CD8-positive, alpha-beta T cell (primary cell): ENCODE measurements at regions of chr14 and their contacts with region 1.

Region 1: DNA sequence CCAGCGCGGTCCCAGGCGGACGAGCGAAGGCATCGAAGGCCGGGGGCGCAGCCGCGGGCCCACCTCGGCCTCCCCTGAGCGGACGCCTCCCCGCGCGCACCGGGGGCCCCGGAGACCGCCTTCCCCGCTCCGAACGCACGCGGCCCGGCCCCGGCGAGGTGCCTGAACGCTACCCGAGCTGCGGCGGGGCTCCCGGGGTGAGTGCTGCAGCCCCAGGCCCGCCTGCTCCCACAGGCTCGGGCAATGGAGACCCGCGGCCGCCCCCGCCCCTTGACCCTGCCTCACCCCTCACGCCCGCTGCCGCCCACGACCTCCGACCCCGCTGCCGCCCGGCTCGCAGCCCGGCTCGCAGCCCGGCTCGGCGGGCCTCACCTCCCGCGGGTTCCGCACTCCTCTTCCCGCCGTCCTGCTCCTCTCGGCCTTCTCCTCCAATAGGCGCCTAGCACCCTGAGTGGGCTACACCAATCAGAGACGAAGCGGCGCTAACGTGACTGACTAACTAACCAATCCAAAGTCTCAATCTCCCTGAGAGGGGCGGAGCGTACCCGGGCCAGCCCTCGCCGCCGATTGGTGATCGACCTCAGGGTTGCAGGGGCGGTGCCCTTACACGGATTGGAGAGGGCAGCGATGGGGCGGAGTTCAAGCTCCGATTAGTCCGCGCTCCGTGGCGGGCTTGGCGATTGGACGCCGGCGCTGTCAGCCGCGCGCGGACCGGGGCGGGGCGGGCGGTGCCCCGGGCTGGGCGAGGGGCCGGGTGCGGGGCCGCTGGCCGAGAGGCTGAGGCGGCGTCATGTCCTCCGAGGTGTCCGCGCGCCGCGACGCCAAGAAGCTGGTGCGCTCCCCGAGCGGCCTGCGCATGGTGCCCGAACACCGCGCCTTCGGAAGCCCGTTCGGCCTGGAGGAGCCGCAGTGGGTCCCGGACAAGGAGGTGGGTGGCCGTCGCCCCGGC is at the starts of genes XRCC3 and ZFYVE21:
- DNase-seq: peak; percentile 99 to 100 (median 99)
- ATAC-seq: peak; percentile 96
- H3K4me3 ChIP-seq: peak within 1 kb of the TSS; percentile 47 to 74
- H3K4me3 Mint-ChIP-seq: peak within 1 kb of the TSS; percentile 97
- H3K27ac ChIP-seq: peak within 1 kb of the TSS in 1 of 2 experiments; percentile 33
- H3K27ac Mint-ChIP-seq: peak within 1 kb of the TSS; percentile 89
- H3K4me1 ChIP-seq: peaks cover 18% of the 10 kb centered on the region
- H3K4me1 Mint-ChIP-seq: peaks cover 43% of the 10 kb centered on the region
- H3K27me3 ChIP-seq: no peaks in the 10 kb centered on the region
- H3K27me3 Mint-ChIP-seq: no peaks in the 10 kb centered on the region
- CTCF ChIP-seq: no peak
- total RNA-seq, gene XRCC3: 5.5 to 6.6 TPM
- total RNA-seq, gene ZFYVE21: 2.5 to 3.7 TPM

Region 2: GRCh38 chr14:103520657-103521437 is 194.5 kb before region 1 on chr14:
- CTCF ChIA-PET with region 1: no interaction called
- POLR2A ChIA-PET with region 1: no interaction called
- intact Hi-C with region 1: loop called in 1 of 2 experiments (anchors 1 kb)
- DNase-seq: peak; percentile 34 to 87 (median 69)
- ATAC-seq: peak; percentile 79
- H3K4me3 ChIP-seq: peak overlapping the region; percentile 41 to 57
- H3K4me3 Mint-ChIP-seq: peak overlapping the region; percentile 71
- H3K27ac ChIP-seq: no peak overlapping the region
- H3K27ac Mint-ChIP-seq: no peak overlapping the region
- H3K4me1 ChIP-seq: peaks cover 24% of the 10 kb centered on the region
- H3K4me1 Mint-ChIP-seq: peaks cover 10% of the 10 kb centered on the region
- H3K27me3 ChIP-seq: peaks cover 5 to 14% of the 10 kb centered on the region in 2 experiments
- H3K27me3 Mint-ChIP-seq: peaks cover 5% of the 10 kb centered on the region
- CTCF ChIP-seq: peak; percentile 57

Region 3: GRCh38 chr14:103562429-103563225 is 152.7 kb before region 1 on chr14 and contains the starts of genes BAG5 and COA8:
- CTCF ChIA-PET with region 1: no interaction called
- POLR2A ChIA-PET with region 1: interaction called, 3 read pairs
- intact Hi-C with region 1: loop called in 1 of 2 experiments (anchors 1 kb)
- DNase-seq: peak; percentile 68 to 92 (median 86)
- ATAC-seq: peak; percentile 81
- H3K4me3 ChIP-seq: peak within 1 kb of the TSS; percentile 96 to 97
- H3K4me3 Mint-ChIP-seq: peak within 1 kb of the TSS; percentile 83
- H3K27ac ChIP-seq: peak within 1 kb of the TSS; percentile 81 to 86
- H3K27ac Mint-ChIP-seq: peak within 1 kb of the TSS; percentile 87
- H3K4me1 ChIP-seq: peaks cover 46% of the 10 kb centered on the region
- H3K4me1 Mint-ChIP-seq: peaks cover 62% of the 10 kb centered on the region
- H3K27me3 ChIP-seq: no peaks in the 10 kb centered on the region
- H3K27me3 Mint-ChIP-seq: no peaks in the 10 kb centered on the region
- CTCF ChIP-seq: no peak
- total RNA-seq, gene BAG5: 46.2 to 46.3 TPM
- total RNA-seq, gene COA8: 11.6 to 13.4 TPM

Region 4: GRCh38 chr14:103628684-103629502 is 86.4 kb before region 1 on chr14 and contains the start of gene KLC1:
- CTCF ChIA-PET with region 1: no interaction called
- POLR2A ChIA-PET with region 1: interaction called, 3 read pairs
- intact Hi-C with region 1: loop called (anchors 1 to 2 kb)
- DNase-seq: peak; percentile 67 to 91 (median 85)
- ATAC-seq: peak; percentile 83
- H3K4me3 ChIP-seq: peak within 1 kb of the TSS; percentile 84 to 98
- H3K4me3 Mint-ChIP-seq: peak within 1 kb of the TSS; percentile 87
- H3K27ac ChIP-seq: peak within 1 kb of the TSS; percentile 81 to 87
- H3K27ac Mint-ChIP-seq: peak within 1 kb of the TSS; percentile 89
- H3K4me1 ChIP-seq: peaks cover 41% of the 10 kb centered on the region
- H3K4me1 Mint-ChIP-seq: peaks cover 47% of the 10 kb centered on the region
- H3K27me3 ChIP-seq: no peaks in the 10 kb centered on the region
- H3K27me3 Mint-ChIP-seq: no peaks in the 10 kb centered on the region
- CTCF ChIP-seq: no peak
- total RNA-seq, gene KLC1: 119 to 130 TPM

Region 5: DNA sequence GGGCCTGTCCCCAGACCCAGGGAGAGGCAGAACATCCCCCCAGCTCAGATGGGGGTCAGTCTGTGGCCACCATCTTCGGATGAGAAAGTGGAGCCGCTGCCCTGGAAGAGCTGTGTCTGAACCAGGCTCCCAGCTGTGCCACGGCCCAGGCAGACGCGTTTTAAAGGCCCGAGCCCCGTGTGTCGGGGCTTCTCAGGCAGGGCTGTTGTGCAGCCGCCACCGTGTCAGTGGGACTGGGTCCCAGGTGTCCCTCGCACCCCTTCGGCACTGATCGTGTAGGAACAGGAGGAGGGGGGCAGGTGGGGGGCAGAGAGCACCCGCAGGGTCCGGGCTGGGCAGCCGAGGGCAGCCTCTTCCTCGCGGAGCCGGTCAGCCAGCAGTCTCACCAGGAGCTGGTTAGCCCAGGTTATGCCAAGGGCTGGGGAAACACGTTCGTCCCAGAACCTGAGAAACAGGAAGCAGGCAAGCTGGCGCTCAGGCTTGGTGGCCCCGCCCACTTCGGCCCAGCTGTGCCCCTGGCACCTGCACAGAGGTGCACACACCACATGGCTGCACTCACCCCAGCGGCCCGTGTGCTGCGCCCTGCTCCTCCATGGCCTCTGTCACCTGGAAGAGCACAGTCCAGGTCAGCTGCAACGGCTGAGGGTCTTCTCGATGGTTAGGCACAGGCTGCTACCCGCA is 16.6 kb before region 1 on chr14:
- CTCF ChIA-PET with region 1: no interaction called
- POLR2A ChIA-PET with region 1: no interaction called
- intact Hi-C with region 1: no loop called
- DNase-seq: no peak
- ATAC-seq: no peak
- H3K4me3 ChIP-seq: no peak overlapping the region
- H3K4me3 Mint-ChIP-seq: no peak overlapping the region
- H3K27ac ChIP-seq: no peak overlapping the region
- H3K27ac Mint-ChIP-seq: no peak overlapping the region
- H3K4me1 ChIP-seq: no peaks in the 10 kb centered on the region
- H3K4me1 Mint-ChIP-seq: peaks cover 9% of the 10 kb centered on the region
- H3K27me3 ChIP-seq: no peaks in the 10 kb centered on the region
- H3K27me3 Mint-ChIP-seq: no peaks in the 10 kb centered on the region
- CTCF ChIP-seq: no peak

Region 6: DNA sequence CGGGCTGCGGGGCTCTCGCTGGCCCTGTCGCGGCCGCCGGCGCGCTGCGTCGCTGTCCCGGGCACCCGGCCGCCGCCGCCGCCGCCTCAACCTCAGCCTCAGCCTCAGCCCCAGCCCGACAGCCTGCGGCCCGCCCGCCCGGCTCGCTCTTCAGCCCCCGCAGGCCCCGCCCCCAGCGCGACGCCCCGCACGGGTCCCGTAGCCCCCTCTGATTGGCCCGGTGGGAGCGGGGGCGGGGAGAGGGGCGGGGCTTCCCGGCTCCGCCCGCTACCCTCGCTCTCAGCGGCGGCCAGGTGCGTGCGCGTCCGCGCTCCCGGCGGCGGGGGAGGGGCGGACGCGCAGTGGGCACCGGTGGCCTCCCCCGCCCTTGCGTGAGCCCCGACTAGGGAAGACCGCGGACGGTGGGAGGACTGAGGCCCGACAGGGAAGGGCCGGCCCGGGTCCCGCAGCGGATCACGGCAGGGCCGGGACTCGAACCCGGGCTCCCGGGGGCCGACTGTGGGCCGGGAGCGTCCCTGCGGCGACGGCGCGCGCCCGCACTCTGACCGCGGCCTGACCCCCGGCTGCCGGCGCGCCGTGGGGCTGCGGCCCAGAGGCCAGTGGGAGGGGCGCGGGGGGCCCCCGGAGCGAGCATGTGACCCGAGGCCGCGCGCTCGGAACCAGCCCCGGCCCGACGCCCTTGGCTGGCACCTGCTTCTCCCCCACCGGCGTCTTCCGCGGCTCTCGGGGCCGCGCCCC is 132.3 kb after region 1 on chr14 and contains the start of gene PPP1R13B:
- CTCF ChIA-PET with region 1: no interaction called
- POLR2A ChIA-PET with region 1: no interaction called
- intact Hi-C with region 1: loop called (anchors 1 to 2 kb)
- DNase-seq: peak; percentile 88 to 97 (median 92)
- ATAC-seq: peak; percentile 98
- H3K4me3 ChIP-seq: peak within 1 kb of the TSS; percentile 65 to 73
- H3K4me3 Mint-ChIP-seq: peak within 1 kb of the TSS; percentile 90
- H3K27ac ChIP-seq: peak within 1 kb of the TSS in 1 of 2 experiments; percentile 27
- H3K27ac Mint-ChIP-seq: peak within 1 kb of the TSS; percentile 74
- H3K4me1 ChIP-seq: peaks cover 14% of the 10 kb centered on the region
- H3K4me1 Mint-ChIP-seq: peaks cover 20% of the 10 kb centered on the region
- H3K27me3 ChIP-seq: no peaks in the 10 kb centered on the region
- H3K27me3 Mint-ChIP-seq: no peaks in the 10 kb centered on the region
- CTCF ChIP-seq: no peak
- total RNA-seq, gene PPP1R13B: 20.9 to 22.6 TPM

Region 7: DNA sequence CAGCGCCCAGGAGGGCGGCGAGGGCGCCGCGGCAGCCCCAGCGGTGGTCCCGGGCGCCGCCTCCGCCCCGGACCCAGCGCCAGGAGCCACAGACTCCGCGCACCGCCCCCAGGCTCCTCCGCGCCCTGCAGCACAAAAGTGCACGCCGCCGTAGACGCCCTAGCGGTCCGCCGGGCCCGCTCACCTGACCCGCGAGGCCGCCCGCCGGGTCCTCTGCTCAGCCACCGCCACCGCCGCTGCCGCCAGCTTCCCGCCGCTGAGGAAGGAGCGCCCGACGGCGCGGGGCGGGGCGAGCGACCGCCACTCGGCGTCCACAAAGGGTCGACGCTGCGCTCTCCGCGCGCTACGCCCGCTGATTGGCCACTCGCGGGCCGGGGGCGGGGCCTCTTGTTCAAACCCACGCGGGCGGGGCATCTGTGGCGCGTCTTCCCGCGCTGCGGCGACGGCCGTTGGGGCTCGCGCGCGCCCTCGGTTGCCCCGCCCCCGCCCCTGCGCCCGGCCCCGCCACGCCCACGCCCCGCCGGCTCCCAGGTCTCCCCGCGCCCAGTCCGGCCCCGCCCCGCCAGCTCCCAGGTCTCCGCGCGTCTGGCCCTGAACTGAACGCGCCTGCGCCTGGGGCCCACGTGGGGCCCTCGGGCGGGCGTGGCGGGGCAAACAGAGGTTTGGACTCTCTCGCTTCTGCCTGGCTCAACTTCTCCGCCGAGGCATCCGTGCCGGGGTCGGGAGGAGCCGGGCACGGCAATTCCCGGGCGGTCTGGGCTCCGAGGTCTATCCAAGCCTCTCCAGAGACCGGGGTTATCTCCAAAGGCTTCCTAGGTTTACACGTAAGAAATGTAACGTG is 1305.7 kb after region 1 on chr14 and contains the start of gene CDCA4:
- CTCF ChIA-PET with region 1: no interaction called
- POLR2A ChIA-PET with region 1: no interaction called
- intact Hi-C with region 1: loop called in 1 of 2 experiments (anchors 5 kb)
- DNase-seq: peak; percentile 97 to 99 (median 98)
- ATAC-seq: peak; percentile 82
- H3K4me3 ChIP-seq: peak within 1 kb of the TSS; percentile 58 to 87
- H3K4me3 Mint-ChIP-seq: peak within 1 kb of the TSS; percentile 89
- H3K27ac ChIP-seq: peak within 1 kb of the TSS; percentile 78 to 81
- H3K27ac Mint-ChIP-seq: peak within 1 kb of the TSS; percentile 96
- H3K4me1 ChIP-seq: peaks cover 23% of the 10 kb centered on the region
- H3K4me1 Mint-ChIP-seq: peaks cover 53% of the 10 kb centered on the region
- H3K27me3 ChIP-seq: no peaks in the 10 kb centered on the region
- H3K27me3 Mint-ChIP-seq: no peaks in the 10 kb centered on the region
- CTCF ChIP-seq: no peak
- total RNA-seq, gene CDCA4: 20.2 to 22.9 TPM